Heart left ventricle (tissue), 16 donors: ENCODE measurements at regions of chrX and their contacts with region 1.

Region 1: DNA sequence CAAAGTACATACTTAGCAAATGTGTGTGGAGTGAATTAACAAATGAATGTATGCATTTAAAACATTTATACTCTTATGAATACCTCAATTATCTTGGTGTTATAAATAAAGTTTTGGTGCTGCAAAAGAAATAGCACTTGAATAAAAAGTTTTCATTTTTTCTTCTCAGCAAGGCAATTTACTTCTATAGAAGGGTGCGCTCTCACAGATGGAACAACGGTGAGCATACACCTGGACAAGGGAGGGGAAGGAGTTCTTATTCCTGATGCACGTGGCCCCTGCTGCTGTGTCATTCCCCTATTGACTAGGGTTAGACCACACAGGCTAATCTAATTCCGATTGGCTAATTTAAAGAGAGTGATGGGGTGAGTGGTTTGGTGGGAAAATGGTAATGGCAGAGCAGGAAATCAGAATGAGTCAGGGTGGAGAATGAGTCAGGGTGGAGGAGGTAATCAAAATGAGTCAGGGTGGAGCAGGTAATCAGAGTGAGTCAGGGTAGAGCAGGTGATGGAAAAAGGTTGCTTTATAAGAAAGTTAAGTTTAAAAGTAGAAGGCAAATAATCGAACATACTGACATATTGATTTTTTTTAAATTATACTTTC is 28.2 kb upstream of the PGK1 start:
- DNase-seq: no peak
- ATAC-seq: no peak
- H3K4me3 ChIP-seq: no peak overlapping the region
- H3K27ac ChIP-seq: no peak overlapping the region
- H3K4me1 ChIP-seq: no peaks in the 10 kb centered on the region
- H3K27me3 ChIP-seq: no peaks in the 10 kb centered on the region
- CTCF ChIP-seq: no peak
- POLR2A ChIP-seq: no peak

Region 2: DNA sequence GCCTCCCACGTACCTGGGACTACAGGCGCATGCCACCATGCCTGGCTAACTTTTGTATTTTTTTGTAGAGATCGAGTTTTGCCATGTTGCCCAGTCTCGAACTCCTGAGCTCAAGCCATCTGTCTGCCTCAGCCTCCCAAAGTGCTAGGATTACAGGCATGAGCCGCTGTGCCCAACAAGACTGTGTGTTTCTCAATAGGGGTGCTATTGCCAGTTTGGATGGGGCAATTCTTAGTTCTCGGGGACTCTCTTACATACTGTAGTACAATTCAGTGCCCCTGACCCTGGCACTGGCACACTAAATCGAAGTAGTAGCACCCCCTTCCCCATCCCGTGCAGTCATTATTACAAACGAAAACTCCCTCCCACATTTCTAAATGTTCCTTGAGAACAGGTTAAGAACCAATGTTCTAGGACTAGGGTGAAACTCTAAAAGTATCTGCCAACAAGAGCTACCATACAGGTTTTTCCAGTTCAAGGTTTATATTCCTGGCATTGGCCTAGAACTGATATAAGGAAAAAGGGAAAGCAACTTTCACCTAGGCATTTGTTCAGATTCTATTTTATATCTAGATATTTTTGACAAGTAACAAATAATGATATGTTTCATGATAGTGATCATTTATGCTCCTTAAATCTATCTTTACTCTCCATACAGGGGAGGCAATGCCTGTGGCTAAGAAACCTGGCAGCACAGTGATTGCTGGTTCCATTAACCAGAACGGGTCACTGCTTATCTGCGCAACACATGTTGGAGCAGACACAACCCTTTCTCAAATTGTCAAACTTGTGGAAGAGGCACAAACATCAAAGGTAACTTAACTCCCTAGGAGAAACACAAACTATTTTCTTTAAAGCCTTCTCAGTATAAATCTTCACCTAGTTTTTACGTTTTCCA is 56.1 kb before region 1 on chrX:
- intact Hi-C with region 1: loop called in 1 of 10 experiments (anchors 10 kb)
- DNase-seq: no peak
- ATAC-seq: no peak
- H3K4me3 ChIP-seq: no peak overlapping the region
- H3K27ac ChIP-seq: no peak overlapping the region
- H3K4me1 ChIP-seq: no peaks in the 10 kb centered on the region
- H3K27me3 ChIP-seq: peaks cover 0 to 4% (median 0%) of the 10 kb centered on the region in 9 donors
- CTCF ChIP-seq: no peak
- POLR2A ChIP-seq: no peak